ENCODE measurements at regions of chr1 and their contacts with region 1.

Region 1: GRCh38 chr1:28893403-28894102 is 20.8 kb upstream of the EPB41 start:
- DNase-seq: no peak
- ATAC-seq: peak; percentile 61; the same call in 1 of the 2 replicates
- H3K4me3 ChIP-seq: no peak overlapping the region
- H3K27ac ChIP-seq: no peak overlapping the region
- H3K4me1 ChIP-seq: no peaks in the 10 kb centered on the region
- H3K27me3 ChIP-seq: no peaks in the 10 kb centered on the region
- CTCF ChIP-seq: no peak; the same call in 1 of the 2 replicates

Region 2: GRCh38 chr1:29043274-29043965 is 149.9 kb after region 1 on chr1:
- CTCF ChIA-PET with region 1: interaction called, 12 read pairs
- POLR2A ChIA-PET with region 1: no interaction called
- in situ Hi-C with region 1: no loop called
- intact Hi-C with region 1: no loop called
- DNase-seq: no peak
- ATAC-seq: no peak
- H3K4me3 ChIP-seq: no peak overlapping the region
- H3K27ac ChIP-seq: no peak overlapping the region
- H3K4me1 ChIP-seq: no peaks in the 10 kb centered on the region
- H3K27me3 ChIP-seq: no peaks in the 10 kb centered on the region
- CTCF ChIP-seq: no peak

Measured in Panc1 (cell line).